Activated CD4-positive, alpha-beta memory T cell treated with anti-CD3 and anti-CD28 coated beads for 36 hours (primary cell): ENCODE measurements at regions of chr7 and their contacts with region 1.

Region 1: DNA sequence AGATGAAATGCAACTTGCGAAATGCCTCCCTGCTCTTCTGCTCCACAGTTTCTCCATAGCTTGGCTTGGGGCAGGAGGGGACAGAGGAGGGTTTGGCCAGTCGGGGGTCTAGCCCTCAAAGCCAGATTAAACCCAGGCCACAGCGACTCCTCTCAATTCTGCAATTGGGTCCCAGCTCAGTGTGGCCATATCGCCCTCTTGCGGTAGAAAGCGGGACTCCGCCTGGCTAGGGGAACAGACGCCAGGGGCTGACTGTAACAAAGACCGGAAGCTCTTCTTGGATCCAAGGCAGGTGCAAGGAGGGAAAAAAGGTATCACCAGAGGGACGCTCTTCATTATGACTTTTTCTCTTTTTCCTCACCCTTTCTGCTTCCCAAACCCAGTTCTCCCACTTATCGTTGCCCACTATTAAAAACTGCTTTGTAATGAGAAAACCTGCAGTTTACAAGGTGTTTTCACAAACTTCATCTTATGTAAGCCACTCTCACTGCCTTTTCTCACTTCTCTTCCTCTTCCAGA is 36.6 kb upstream of the TNPO3 start:
- DNase-seq: peak; percentile 93
- H3K4me3 Mint-ChIP-seq: no peak overlapping the region
- H3K27ac Mint-ChIP-seq: peak overlapping the region; percentile 52
- H3K4me1 Mint-ChIP-seq: peaks cover 15% of the 10 kb centered on the region
- H3K27me3 Mint-ChIP-seq: peaks cover 1% of the 10 kb centered on the region

Region 2: GRCh38 chr7:128835231-128835751 is 256.3 kb before region 1 on chr7:
- CTCF ChIA-PET with region 1: no interaction called
- POLR2A ChIA-PET with region 1: no interaction called
- intact Hi-C with region 1: no loop called
- DNase-seq: no peak
- H3K4me3 Mint-ChIP-seq: no peak overlapping the region
- H3K27ac Mint-ChIP-seq: no peak overlapping the region
- H3K4me1 Mint-ChIP-seq: peaks cover 8% of the 10 kb centered on the region
- H3K27me3 Mint-ChIP-seq: peaks cover 12% of the 10 kb centered on the region

Region 3: DNA sequence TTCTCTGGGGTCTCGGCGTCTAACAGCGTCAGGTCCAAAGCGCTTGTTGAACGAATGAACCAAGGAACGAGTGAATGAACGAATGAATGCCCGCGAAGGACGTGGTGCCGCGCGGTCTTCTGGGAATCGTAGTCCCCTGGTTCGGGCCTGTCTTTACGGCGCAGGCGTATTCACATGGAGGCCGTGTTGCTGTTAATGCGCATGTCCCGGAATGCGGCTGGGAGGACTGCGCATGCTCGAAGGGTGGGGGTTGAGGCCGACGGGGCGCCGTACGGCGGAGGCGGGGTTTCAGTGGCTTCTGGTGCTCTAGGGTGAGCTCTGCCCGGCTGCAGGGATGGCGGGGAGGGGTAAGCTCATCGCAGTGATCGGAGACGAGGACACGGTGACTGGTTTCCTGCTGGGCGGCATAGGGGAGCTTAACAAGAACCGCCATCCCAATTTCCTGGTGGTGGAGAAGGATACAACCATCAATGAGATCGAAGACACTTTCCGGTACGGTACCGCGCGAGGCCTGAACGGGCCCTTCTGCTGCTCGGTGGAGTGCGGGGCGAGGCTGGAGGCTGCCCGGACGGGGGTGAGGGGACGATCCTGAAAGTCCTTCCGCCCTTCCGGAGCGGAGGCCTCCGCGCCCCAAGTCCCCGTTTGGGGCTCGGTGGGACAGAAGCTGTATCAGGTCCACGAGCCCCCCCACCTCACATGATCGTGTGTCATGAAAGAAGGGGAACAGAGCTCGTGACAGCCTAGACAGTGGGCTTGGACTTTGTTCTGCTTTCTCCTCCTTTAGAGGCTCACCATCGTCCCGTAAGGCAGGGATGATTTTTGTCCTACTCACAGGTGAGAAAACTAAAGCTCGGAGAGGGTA is 228.7 kb before region 1 on chr7 and contains the start of gene ATP6V1F:
- CTCF ChIA-PET with region 1: interaction called, 13 read pairs
- POLR2A ChIA-PET with region 1: no interaction called
- intact Hi-C with region 1: no loop called
- DNase-seq: peak; percentile 100
- H3K4me3 Mint-ChIP-seq: peak within 1 kb of the TSS; percentile 98
- H3K27ac Mint-ChIP-seq: peak within 1 kb of the TSS; percentile 84
- H3K4me1 Mint-ChIP-seq: peaks cover 14% of the 10 kb centered on the region
- H3K27me3 Mint-ChIP-seq: peaks cover 1% of the 10 kb centered on the region
- total RNA-seq, gene ATP6V1F: 113 to 117 TPM

Region 4: DNA sequence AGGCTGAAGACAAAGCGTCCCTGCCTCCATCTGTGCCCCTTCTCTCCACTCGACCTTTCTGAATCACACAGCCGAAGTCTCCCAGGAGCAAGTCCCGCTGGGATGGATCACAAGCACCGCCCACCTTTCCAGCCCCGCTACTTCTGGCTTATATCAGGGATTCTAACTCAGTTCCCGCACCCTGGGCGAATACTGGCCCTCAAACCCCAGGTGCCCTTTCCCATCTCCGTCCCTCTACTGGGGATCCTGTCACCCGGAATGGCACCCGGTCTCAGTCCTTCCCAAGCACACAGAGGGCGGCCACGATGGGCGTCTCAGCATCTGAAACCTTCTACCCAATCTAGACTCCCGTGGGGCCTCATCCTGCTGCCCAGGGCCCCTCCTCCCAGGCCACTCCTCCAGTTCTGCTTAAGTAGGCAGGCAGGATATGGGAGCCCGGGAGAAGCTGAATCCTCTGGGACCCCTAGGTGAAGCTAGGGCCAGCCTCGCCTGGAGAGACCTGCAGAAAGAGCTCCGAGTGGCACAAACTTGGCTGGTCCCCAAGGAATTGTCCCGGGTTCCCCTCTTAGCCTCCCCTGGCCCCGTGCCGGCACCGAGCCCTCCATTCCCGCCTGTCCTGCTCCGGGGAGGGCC is 181.8 kb before region 1 on chr7:
- CTCF ChIA-PET with region 1: interaction called, 70 read pairs
- POLR2A ChIA-PET with region 1: no interaction called
- intact Hi-C with region 1: loop called (anchors 1 kb)
- DNase-seq: no peak
- H3K4me3 Mint-ChIP-seq: no peak overlapping the region
- H3K27ac Mint-ChIP-seq: no peak overlapping the region
- H3K4me1 Mint-ChIP-seq: peaks cover 4% of the 10 kb centered on the region
- H3K27me3 Mint-ChIP-seq: peaks cover 45% of the 10 kb centered on the region

Region 5: DNA sequence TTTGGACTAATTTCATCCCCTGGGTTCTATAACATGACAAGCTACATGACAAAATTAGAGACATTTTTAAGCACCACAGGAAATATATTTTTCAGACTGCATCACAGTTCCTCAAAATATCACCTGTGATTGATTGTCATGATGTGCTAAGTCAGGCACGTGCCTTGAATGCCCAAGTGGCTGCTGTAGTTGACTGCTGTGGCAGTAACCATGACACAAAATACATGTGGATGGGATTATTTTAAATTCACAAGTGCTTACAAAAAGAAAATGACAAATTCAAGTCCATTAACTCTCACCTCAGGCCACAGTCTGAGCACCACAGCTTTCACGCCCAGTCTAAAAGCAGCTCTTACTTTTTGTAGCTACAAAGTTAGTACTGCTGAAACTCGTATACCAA is 82.1 kb before region 1 on chr7:
- CTCF ChIA-PET with region 1: interaction called, 17 read pairs
- POLR2A ChIA-PET with region 1: no interaction called
- intact Hi-C with region 1: loop called (anchors 2 kb)
- DNase-seq: peak; percentile 11
- H3K4me3 Mint-ChIP-seq: no peak overlapping the region
- H3K27ac Mint-ChIP-seq: no peak overlapping the region
- H3K4me1 Mint-ChIP-seq: peaks cover 46% of the 10 kb centered on the region
- H3K27me3 Mint-ChIP-seq: no peaks in the 10 kb centered on the region

Region 6: DNA sequence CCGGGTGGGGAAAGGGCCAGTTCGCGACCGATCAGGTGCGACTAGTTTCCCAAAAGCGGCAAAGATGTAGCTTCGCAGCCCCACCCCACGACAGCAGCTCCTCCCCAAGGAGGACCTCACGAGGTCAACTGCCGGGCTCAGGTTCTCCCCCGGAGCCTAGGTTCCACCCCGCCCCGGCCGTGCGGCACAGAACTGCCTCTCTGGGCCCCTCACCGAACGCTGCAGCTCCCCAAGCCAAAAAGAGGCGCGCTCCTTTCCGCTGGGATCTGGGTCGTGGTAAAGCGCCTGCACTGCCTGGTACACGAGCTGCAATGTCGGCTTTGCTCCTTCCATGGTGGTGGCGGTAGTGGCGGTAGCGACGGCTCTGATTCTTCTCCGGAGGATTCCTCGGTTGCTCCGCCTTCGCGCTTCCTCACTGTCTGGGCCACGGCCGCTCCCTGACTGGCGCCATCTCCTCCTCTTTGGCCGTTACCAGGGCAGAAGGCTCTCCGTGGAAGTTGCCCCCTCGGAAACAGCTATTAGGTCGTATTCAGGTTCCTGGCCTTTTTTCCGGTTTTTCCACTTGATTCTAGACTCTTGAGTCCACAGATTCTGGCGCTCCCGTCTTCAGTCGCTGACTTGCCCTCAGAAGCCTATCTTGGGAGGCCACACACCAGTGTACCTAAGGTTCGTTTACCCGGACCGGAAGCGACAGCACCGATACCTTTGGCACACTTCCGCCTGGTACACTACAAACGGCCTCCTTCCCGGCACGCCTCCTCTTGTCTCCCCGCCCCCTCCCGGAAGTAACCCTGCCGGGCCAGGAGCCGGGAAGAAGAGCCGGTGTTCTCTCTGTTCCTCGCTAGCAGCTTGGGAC is 36.9 kb before region 1 on chr7 and contains the start of gene TNPO3:
- CTCF ChIA-PET with region 1: interaction called, 10 read pairs
- POLR2A ChIA-PET with region 1: no interaction called
- intact Hi-C with region 1: no loop called
- DNase-seq: peak; percentile 94
- H3K4me3 Mint-ChIP-seq: peak within 1 kb of the TSS; percentile 97
- H3K27ac Mint-ChIP-seq: peak within 1 kb of the TSS; percentile 98
- H3K4me1 Mint-ChIP-seq: peaks cover 26% of the 10 kb centered on the region
- H3K27me3 Mint-ChIP-seq: peaks cover 7% of the 10 kb centered on the region
- total RNA-seq, gene TNPO3: 53.4 to 54.5 TPM

Region 7: GRCh38 chr7:129110258-129110981 is 18.9 kb after region 1 on chr7:
- CTCF ChIA-PET with region 1: interaction called, 15 read pairs
- POLR2A ChIA-PET with region 1: no interaction called
- intact Hi-C with region 1: no loop called
- DNase-seq: no peak
- H3K4me3 Mint-ChIP-seq: no peak overlapping the region
- H3K27ac Mint-ChIP-seq: no peak overlapping the region
- H3K4me1 Mint-ChIP-seq: no peaks in the 10 kb centered on the region
- H3K27me3 Mint-ChIP-seq: peaks cover 4% of the 10 kb centered on the region

Region 8: DNA sequence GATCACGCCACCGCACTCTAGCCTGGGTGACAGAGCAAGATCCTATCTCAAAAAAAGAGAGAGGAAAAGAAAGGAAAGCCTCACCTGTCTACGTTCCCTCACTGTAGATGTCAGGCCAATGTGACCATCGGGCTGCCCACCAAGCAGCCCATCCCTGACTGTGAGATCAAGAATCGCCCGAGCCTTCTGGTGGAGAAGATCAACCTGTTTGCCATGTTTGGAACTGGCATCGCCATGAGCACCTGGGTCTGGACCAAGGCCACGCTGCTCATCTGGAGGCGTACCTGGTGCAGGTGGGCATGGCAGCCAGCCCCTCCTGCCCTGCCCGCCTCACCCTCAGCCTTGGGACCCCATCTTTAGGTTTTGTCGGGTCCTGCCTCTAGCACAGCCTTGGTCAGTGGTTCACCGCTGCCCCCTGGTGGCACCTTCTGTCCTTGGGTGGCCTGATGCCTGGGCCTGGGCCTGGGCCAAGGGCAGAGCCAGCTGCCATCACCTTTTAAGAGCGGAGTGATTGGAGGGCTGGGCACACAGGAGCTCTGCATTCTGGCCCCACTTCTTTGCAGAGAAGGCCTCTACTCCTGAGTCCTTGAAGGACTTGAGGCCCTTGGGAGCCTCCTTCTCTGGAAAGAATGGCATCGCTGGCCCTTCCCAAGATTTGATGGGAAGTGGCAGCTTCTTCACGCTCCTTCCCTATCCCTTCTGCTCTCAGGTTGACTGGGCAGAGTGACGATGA is 118.9 kb after region 1 on chr7:
- CTCF ChIA-PET with region 1: interaction called, 6 read pairs
- POLR2A ChIA-PET with region 1: no interaction called
- intact Hi-C with region 1: loop called (anchors 5 kb)
- DNase-seq: peak; percentile 82
- H3K4me3 Mint-ChIP-seq: no peak overlapping the region
- H3K27ac Mint-ChIP-seq: no peak overlapping the region
- H3K4me1 Mint-ChIP-seq: no peaks in the 10 kb centered on the region
- H3K27me3 Mint-ChIP-seq: peaks cover 4% of the 10 kb centered on the region

Region 9: DNA sequence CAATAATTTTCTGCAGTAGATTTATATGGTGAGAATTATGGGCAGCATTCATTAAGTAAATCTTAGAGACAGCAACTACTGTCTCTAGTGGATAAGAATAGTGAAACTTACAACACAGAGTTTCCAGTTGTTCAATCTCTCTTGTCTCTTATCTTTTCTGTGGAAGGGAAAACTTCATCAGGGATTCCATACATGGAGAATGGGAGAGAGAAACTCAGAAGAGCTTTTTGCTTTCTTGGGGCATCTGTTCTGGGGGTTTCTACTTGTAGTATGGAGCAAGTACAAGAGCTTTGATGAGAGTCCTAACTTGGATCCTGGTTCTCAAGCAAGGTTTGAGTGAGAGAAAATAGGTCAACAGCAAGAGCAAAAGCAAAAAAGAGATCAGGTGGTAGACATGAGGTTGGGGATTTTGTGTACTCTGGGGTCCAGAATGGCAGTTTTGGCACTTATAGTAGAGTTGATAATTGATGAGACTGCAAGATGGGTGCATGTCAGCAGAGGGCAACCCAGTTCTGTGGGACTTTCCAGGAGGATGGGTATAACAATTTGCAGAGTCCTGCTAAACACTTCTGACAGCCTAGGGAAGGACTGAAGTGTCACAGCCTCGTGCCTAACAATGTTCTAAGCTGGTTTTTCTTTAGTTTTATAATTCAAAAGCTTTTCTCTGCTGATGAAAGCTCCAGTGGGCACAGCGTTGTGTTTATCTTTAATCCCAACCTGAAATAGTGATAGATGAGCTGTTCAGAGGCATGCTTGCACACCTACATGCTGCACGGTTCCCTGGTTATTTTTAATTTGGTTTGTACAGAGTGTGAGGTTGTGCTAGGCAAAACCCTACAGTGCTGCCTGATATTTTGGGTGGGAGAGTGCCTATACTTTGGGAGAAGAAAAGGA is 310.7 kb after region 1 on chr7:
- CTCF ChIA-PET with region 1: no interaction called
- POLR2A ChIA-PET with region 1: no interaction called
- intact Hi-C with region 1: no loop called
- DNase-seq: peak; percentile 56
- H3K4me3 Mint-ChIP-seq: no peak overlapping the region
- H3K27ac Mint-ChIP-seq: peak overlapping the region; percentile 29
- H3K4me1 Mint-ChIP-seq: peaks cover 37% of the 10 kb centered on the region
- H3K27me3 Mint-ChIP-seq: no peaks in the 10 kb centered on the region

Region 10: DNA sequence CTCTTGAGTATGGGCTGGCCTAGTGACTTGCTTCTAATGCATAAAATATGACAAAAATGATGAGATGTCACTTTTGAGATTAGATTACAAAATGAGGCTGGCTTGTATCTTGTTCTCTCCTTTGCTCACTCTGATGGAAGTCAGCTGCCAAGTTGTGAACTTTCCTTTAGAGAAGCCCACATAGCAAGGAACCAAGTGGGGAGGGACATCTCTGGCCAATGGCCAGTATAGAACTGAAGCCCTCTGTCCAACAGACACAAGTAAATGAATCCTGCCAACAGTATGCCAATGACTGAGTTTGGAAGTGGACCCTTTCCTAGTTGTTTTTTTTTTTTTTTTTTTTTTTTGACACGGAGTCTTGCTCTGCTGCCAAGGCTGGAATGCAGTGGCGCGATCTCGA is 956.3 kb after region 1 on chr7:
- CTCF ChIA-PET with region 1: no interaction called
- POLR2A ChIA-PET with region 1: no interaction called
- intact Hi-C with region 1: no loop called
- DNase-seq: no peak
- H3K4me3 Mint-ChIP-seq: no peak overlapping the region
- H3K27ac Mint-ChIP-seq: no peak overlapping the region
- H3K4me1 Mint-ChIP-seq: peaks cover 13% of the 10 kb centered on the region
- H3K27me3 Mint-ChIP-seq: no peaks in the 10 kb centered on the region